ENCODE measurements at regions of chr4 and their contacts with region 1.

Region 1: DNA sequence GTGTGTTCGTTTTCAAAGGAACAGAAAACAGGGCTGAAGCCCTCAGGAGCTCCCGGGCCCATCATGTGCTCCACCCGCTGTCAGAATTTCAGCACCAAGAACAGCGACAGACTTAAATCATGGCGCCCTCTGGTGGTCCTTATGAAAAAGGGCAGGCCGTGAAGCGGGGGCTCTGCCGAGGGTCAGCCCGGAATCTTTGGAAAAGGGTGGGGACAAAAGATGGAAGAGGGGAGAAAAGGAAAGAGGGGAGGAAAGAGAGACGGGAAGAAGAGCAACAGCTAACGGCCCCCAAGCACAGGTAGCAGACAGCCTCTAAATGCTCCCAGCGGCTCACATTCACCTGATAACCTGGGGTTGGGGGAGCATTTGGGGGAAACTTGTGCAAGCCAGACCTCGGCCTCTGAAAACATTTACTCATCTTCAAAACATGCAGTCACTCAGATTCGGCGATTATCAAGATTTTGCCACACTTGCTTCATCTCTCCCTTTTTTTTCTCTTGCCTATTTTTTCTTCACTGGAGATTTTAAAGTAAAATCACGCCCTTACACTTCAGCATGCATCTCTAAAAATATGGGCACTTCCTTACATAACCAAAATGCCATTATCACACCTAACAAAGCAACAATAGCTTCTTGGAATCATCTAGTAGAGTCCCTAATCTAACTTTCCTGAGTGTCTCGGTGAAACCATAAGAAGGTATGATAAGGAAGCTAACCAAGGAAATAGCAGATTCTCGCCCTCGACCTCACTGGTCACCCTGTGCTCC is 28.1 kb upstream of the MAN2B2 start:
- DNase-seq: peak; percentile 39 to 69
- H3K4me3 ChIP-seq: no peak overlapping the region
- H3K27ac ChIP-seq: no peak overlapping the region
- H3K4me1 ChIP-seq: no peaks in the 10 kb centered on the region
- H3K27me3 ChIP-seq: no peaks in the 10 kb centered on the region; a peak in 1 of 7 replicates
- CTCF ChIP-seq: peak; percentile 80 to 93 (median 85)
- EP300 ChIP-seq: 0 out of 3 replicates have a peak, but pooled peaks of 1 of the 2 experiments have one; percentile 13
- POLR2A ChIP-seq: no peak
- RAD21 ChIP-seq: peak; percentile 67 to 80

Region 2: DNA sequence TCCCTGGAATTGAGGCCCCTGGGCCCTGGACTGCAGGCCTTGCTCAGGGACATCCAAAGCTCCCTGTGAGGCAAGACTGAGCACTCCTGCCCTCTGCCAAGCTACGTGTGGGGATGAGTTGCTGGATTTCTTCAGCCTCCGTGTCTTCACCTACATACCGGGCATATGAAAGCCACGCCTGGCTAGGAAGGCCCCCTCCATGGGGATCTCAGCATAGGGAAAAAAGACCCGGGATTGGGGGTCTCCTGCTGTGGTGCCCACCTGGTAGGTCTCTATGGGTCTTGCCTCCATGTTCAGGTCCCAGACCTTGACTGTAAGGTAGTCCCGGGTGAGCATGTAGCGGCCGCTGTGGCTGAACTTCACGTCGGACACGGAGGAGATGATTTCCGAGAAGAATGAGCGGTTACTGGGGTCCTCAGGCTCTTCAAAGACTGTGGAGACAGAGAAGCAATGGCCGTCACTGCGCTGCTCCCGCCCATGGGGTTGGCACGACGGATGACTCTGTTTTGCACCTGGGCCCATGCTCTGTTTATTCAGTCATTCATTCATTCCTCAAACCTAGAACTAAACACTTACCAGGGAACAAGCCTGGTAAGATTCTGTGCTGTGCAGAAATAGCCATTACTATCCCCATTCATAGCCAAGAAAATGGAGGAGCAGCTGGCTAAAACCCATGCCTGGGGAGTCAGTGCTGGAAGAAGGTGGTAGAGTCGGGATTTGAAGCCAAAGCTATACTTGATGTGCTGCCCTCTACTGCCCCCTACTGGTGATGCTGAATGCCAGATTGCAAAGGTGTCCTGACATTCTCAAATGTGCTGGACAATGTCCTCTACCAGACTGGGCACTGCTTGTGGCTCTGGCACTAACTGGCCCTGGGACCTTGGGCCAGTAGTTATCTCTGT is 213.3 kb before region 1 on chr4:
- CTCF ChIA-PET with region 1: interaction called, 48 read pairs
- POLR2A ChIA-PET with region 1: no interaction called
- DNase-seq: peak in 1 of 2 experiments; percentile 67
- H3K4me3 ChIP-seq: no peak overlapping the region
- H3K27ac ChIP-seq: no peak overlapping the region
- H3K4me1 ChIP-seq: peaks cover 0 to 5% (median 4%) of the 10 kb centered on the region in 4 experiments; a peak in 4 of 7 replicates
- H3K27me3 ChIP-seq: no peaks in the 10 kb centered on the region
- CTCF ChIP-seq: peak in 2 of 3 experiments; percentile 59 to 85; a peak in 3 of 4 replicates
- EP300 ChIP-seq: no peak
- POLR2A ChIP-seq: no peak
- RAD21 ChIP-seq: peak; percentile 46 to 56

Region 3: GRCh38 chr4:6416518-6417286 is 130.2 kb before region 1 on chr4:
- CTCF ChIA-PET with region 1: interaction called, 14 read pairs
- POLR2A ChIA-PET with region 1: no interaction called
- DNase-seq: no peak
- H3K4me3 ChIP-seq: no peak overlapping the region
- H3K27ac ChIP-seq: no peak overlapping the region
- H3K4me1 ChIP-seq: peaks cover 0 to 23% (median 17%) of the 10 kb centered on the region in 4 experiments; a peak in 6 of 7 replicates
- H3K27me3 ChIP-seq: no peaks in the 10 kb centered on the region
- CTCF ChIP-seq: no peak
- EP300 ChIP-seq: no peak
- POLR2A ChIP-seq: no peak
- RAD21 ChIP-seq: no peak

Region 4: GRCh38 chr4:6427439-6428090 is 119.3 kb before region 1 on chr4:
- CTCF ChIA-PET with region 1: interaction called, 10 read pairs
- POLR2A ChIA-PET with region 1: no interaction called
- DNase-seq: no peak
- H3K4me3 ChIP-seq: no peak overlapping the region
- H3K27ac ChIP-seq: no peak overlapping the region
- H3K4me1 ChIP-seq: no peaks in the 10 kb centered on the region
- H3K27me3 ChIP-seq: no peaks in the 10 kb centered on the region
- CTCF ChIP-seq: peak in 2 of 3 experiments; percentile 58 to 59; a peak in 3 of 4 replicates
- EP300 ChIP-seq: no peak
- POLR2A ChIP-seq: no peak
- RAD21 ChIP-seq: peak; percentile 58 to 66

Region 5: DNA sequence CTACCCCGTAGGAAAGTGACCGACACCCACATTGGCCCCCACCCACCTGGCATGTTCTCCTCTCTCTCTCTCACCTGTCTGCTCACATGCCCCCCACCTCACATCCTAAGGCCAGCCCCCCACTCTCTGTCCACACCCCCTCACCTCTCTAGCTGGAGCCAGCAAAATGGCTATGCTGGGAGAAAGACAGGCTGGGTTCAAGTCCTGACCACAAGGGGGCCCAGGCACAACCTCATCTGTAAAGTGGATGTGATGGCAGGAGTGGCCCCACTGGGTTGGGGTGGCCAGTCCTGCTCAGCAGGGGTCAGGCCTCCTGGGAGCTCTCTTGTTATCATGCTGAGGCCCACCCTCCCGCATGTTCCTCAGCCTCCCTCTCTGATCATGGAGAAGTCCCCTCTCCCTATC is 72.8 kb before region 1 on chr4:
- CTCF ChIA-PET with region 1: interaction called, 20 read pairs
- POLR2A ChIA-PET with region 1: no interaction called
- DNase-seq: peak in 1 of 2 experiments; percentile 60
- H3K4me3 ChIP-seq: no peak overlapping the region
- H3K27ac ChIP-seq: no peak overlapping the region
- H3K4me1 ChIP-seq: peaks cover 0 to 16% (median 12%) of the 10 kb centered on the region in 4 experiments; a peak in 6 of 7 replicates
- H3K27me3 ChIP-seq: peaks cover 20 to 45% (median 38%) of the 10 kb centered on the region in 4 experiments
- CTCF ChIP-seq: peak in 2 of 3 experiments; percentile 63 to 71; a peak in 3 of 4 replicates
- EP300 ChIP-seq: no peak
- POLR2A ChIP-seq: no peak
- RAD21 ChIP-seq: peak; percentile 38 to 59; a peak in 3 of 4 replicates

Region 6: DNA sequence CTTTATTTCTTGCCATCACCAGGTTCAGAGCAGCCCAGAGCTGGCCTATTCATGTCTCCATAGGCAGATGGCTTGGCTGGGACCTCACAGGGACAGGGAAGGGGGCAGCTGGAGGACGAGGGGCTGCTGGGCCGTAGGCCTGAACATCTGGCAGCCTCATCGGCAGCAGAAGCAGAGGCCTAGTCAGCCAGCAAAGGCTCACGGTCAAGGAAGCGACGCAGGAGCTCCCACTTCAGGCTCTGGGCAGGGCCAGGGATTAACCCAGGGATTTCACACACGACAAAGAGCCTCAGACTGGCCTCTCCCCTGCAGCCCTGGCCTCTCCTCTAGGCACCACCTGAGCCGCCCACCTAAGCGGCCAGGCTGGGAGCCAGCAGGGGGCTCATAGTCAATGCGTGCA is 17.8 kb before region 1 on chr4:
- CTCF ChIA-PET with region 1: interaction called, 50 read pairs
- POLR2A ChIA-PET with region 1: interaction called, 3 read pairs
- DNase-seq: no peak
- H3K4me3 ChIP-seq: no peak overlapping the region
- H3K27ac ChIP-seq: no peak overlapping the region
- H3K4me1 ChIP-seq: peaks cover 0 to 17% (median 7%) of the 10 kb centered on the region in 4 experiments; a peak in 4 of 7 replicates
- H3K27me3 ChIP-seq: no peaks in the 10 kb centered on the region
- CTCF ChIP-seq: no peak
- EP300 ChIP-seq: no peak
- POLR2A ChIP-seq: no peak
- RAD21 ChIP-seq: no peak

Region 7: DNA sequence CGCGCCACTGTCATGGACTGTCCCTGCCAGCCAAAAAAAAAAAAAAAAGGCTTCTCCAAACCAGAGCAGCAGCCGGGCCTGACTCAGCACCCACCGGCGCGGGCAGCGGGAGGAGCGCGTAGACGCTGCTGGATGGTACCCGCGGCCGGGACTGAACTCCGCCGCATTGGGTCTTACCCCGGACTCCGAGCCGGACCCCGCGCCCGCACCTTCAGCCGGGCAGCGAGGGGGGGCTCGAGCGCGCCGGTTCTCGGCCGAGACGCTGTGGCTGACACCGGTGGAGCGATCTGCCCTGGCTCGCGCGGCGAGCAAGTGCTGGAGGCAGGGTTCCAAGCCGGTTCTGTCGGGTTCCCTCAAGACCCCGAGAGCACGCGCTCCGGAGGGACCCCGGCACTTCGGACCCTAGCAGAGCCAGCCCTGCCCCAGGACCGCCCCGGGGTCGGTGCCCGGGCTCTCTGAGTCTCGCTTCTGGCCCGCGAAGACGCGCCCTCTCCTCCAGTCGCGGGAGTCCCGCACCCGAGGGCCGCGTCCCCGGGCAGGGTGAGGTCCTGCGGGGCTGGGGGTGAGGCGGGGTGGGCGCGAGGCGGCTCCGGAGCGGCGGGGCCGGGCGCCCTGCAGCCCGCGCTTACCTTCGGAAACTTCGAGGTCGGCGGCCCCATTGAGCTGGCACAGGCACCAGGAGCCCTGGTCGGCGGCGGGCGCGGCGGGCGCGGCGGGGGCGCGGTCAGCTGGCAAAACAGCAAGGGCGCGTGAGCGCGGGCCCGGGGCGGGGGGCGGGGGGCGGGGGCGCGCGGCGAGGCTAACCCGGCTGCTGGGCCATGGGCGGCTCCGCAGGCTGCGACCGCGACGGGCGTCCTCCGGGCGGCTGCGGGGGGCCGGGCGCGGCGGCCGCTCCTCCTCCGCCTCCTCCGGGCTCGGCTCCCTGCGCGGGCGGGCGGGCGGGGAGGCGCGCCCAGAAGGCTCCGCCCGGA is 16.4 kb after region 1 on chr4:
- CTCF ChIA-PET with region 1: interaction called, 58 read pairs
- POLR2A ChIA-PET with region 1: no interaction called
- DNase-seq: peak in 1 of 2 experiments; percentile 67
- H3K4me3 ChIP-seq: peak overlapping the region; percentile 28 to 64 (median 42)
- H3K27ac ChIP-seq: no peak overlapping the region
- H3K4me1 ChIP-seq: peaks cover 0 to 5% (median 2%) of the 10 kb centered on the region in 4 experiments; a peak in 3 of 7 replicates
- H3K27me3 ChIP-seq: peaks cover 38 to 79% (median 62%) of the 10 kb centered on the region in 4 experiments
- CTCF ChIP-seq: no peak
- EP300 ChIP-seq: no peak
- POLR2A ChIP-seq: no peak
- RAD21 ChIP-seq: no peak